HepG2 (cell line): ENCODE measurements at regions of chr10 and their contacts with region 1.

Region 1: DNA sequence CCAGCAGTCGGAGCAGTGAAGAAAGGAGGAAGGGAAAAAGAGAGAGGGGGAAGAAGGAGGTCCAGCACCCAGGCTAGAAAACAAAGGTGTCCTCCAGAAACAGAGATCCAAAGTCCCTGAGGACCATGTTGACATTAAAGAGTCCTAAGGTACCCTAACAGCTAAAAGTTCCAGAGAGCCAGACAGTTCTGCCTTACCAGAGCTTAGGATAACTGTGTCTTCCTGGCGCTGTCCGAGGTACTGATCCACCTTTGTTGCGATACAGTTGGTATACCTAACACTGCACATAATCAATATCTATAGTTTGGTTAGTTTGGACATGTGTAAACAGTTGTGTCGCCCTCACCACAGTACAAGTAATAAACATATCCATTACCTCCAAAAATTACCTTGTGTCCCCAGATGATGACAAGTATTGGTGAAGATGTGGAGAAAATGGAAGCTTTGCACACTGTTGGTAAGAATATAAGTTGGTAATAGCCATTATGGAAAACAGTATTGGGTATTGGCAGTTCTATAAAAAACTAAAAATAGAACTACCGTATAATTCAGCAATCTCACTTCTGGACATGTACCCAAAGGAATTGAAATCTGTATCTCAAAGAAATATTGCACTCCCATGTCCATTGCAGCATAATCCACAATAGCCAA is 59.8 kb downstream of the GRID1 start:
- DNase-seq: peak; percentile 7
- ATAC-seq: peak; percentile 70
- H3K4me3 ChIP-seq: no peak overlapping the region
- H3K27ac ChIP-seq: no peak overlapping the region
- H3K4me1 ChIP-seq: no peaks in the 10 kb centered on the region
- H3K27me3 ChIP-seq: no peaks in the 10 kb centered on the region; a peak in 1 of 5 replicates
- CTCF ChIP-seq: no peak
- EP300 ChIP-seq: no peak
- POLR2A ChIP-seq: no peak
- RAD21 ChIP-seq: no peak

Region 2: GRCh38 chr10:86367152-86367951 is 60.6 kb after region 1 on chr10:
- CTCF ChIA-PET with region 1: no interaction called
- POLR2A ChIA-PET with region 1: no interaction called
- in situ Hi-C with region 1: no loop called
- intact Hi-C with region 1: no loop called
- DNase-seq: no peak
- ATAC-seq: peak; percentile 13; the same call in 2 of the 3 replicates
- H3K4me3 ChIP-seq: peak overlapping the region in 2 of 3 experiments; percentile 7 to 40; a peak in 3 of 6 replicates
- H3K27ac ChIP-seq: no peak overlapping the region
- H3K4me1 ChIP-seq: no peaks in the 10 kb centered on the region
- H3K27me3 ChIP-seq: peaks cover 14 to 82% of the 10 kb centered on the region in 2 experiments
- CTCF ChIP-seq: no peak
- EP300 ChIP-seq: no peak
- POLR2A ChIP-seq: no peak
- RAD21 ChIP-seq: no peak

Region 3: GRCh38 chr10:88227342-88228018 is 1920.7 kb after region 1 on chr10:
- CTCF ChIA-PET with region 1: no interaction called
- POLR2A ChIA-PET with region 1: no interaction called
- in situ Hi-C with region 1: no loop called
- intact Hi-C with region 1: loop called (anchors 10 kb)
- DNase-seq: no peak
- ATAC-seq: peak; percentile 72
- H3K4me3 ChIP-seq: no peak overlapping the region
- H3K27ac ChIP-seq: no peak overlapping the region
- H3K4me1 ChIP-seq: peaks cover 20% of the 10 kb centered on the region
- H3K27me3 ChIP-seq: no peaks in the 10 kb centered on the region; a peak in 1 of 5 replicates
- CTCF ChIP-seq: no peak
- EP300 ChIP-seq: no peak
- POLR2A ChIP-seq: no peak
- RAD21 ChIP-seq: no peak